ENCODE measurements at regions of chr2 and their contacts with region 1.

Region 1: DNA sequence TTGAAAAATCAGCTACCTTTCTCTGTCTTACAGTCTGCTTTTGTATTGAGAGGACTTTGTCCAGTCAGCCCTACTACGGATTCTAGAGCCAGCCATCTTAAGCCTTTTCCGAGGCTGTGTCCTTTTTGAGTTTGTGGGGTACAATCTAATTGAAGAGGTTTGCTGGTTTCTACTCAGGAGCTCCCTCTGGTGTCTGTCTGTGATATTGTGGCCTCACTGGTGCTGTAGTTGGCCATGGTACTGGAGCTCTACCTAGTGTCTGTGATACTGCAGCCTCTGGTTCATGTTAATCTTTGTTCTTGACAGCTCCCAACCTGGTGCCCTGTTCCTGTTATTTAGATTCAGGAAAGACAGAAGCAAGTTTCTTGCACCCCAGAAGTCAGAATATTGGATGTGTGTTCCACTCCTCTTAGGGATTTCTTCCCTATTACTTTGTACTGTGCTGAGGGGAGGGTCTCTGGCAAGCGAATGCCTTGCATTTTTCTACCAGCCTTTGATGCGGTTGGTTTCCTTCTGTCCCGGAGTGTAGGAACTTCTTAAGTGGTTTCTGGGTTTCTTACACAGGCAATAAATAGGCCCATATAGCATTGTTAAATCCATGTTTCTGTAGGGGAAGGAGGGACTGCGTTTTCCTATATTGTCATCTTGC is 78.5 kb downstream of the ACSL3 start:
- DNase-seq: peak; percentile 45
- ATAC-seq: peak; percentile 98
- H3K4me3 ChIP-seq: no peak overlapping the region
- H3K27ac ChIP-seq: no peak overlapping the region
- H3K4me1 ChIP-seq: peaks cover 7% of the 10 kb centered on the region; the same call in 1 of the 2 replicates
- H3K27me3 ChIP-seq: no peaks in the 10 kb centered on the region
- CTCF ChIP-seq: peak; percentile 82 to 85 (median 85)
- EP300 ChIP-seq: no peak
- POLR2A ChIP-seq: no peak
- RAD21 ChIP-seq: peak; percentile 64

Region 2: GRCh38 chr2:222707689-222708525 is 231.4 kb before region 1 on chr2:
- CTCF ChIA-PET with region 1: interaction called, 72 read pairs
- POLR2A ChIA-PET with region 1: no interaction called
- RAD21 ChIA-PET with region 1: interaction called, 14 read pairs
- SMC1A ChIA-PET with region 1: interaction called, 26 read pairs
- in situ Hi-C with region 1: no loop called
- intact Hi-C with region 1: loop called (anchors 1 kb)
- DNase-seq: no peak
- ATAC-seq: peak; percentile 81
- H3K4me3 ChIP-seq: no peak overlapping the region
- H3K27ac ChIP-seq: no peak overlapping the region
- H3K4me1 ChIP-seq: peaks cover 8% of the 10 kb centered on the region
- H3K27me3 ChIP-seq: no peaks in the 10 kb centered on the region
- CTCF ChIP-seq: peak; percentile 75 to 88 (median 78)
- EP300 ChIP-seq: no peak
- POLR2A ChIP-seq: no peak
- RAD21 ChIP-seq: peak; percentile 92

Region 3: GRCh38 chr2:222903234-222904220 is 35.8 kb before region 1 on chr2:
- CTCF ChIA-PET with region 1: interaction called, 19 read pairs
- POLR2A ChIA-PET with region 1: interaction called, 3 read pairs
- RAD21 ChIA-PET with region 1: interaction called, 6 read pairs
- SMC1A ChIA-PET with region 1: interaction called, 4 read pairs
- in situ Hi-C with region 1: no loop called
- intact Hi-C with region 1: no loop called
- DNase-seq: no peak
- ATAC-seq: peak; percentile 95
- H3K4me3 ChIP-seq: no peak overlapping the region
- H3K27ac ChIP-seq: no peak overlapping the region
- H3K4me1 ChIP-seq: no peaks in the 10 kb centered on the region
- H3K27me3 ChIP-seq: no peaks in the 10 kb centered on the region
- CTCF ChIP-seq: peak; percentile 62 to 77 (median 66); a peak in 5 of 6 replicates
- EP300 ChIP-seq: no peak
- POLR2A ChIP-seq: no peak
- RAD21 ChIP-seq: peak; percentile 95

Region 4: GRCh38 chr2:222922019-222922800 is 17.1 kb before region 1 on chr2:
- CTCF ChIA-PET with region 1: interaction called, 25 read pairs
- POLR2A ChIA-PET with region 1: no interaction called
- RAD21 ChIA-PET with region 1: interaction called, 6 read pairs
- SMC1A ChIA-PET with region 1: interaction called, 6 read pairs
- in situ Hi-C with region 1: no loop called
- intact Hi-C with region 1: no loop called
- DNase-seq: no peak
- ATAC-seq: no peak
- H3K4me3 ChIP-seq: no peak overlapping the region
- H3K27ac ChIP-seq: no peak overlapping the region
- H3K4me1 ChIP-seq: no peaks in the 10 kb centered on the region
- H3K27me3 ChIP-seq: no peaks in the 10 kb centered on the region
- CTCF ChIP-seq: no peak
- EP300 ChIP-seq: no peak
- POLR2A ChIP-seq: no peak
- RAD21 ChIP-seq: no peak

Region 5: DNA sequence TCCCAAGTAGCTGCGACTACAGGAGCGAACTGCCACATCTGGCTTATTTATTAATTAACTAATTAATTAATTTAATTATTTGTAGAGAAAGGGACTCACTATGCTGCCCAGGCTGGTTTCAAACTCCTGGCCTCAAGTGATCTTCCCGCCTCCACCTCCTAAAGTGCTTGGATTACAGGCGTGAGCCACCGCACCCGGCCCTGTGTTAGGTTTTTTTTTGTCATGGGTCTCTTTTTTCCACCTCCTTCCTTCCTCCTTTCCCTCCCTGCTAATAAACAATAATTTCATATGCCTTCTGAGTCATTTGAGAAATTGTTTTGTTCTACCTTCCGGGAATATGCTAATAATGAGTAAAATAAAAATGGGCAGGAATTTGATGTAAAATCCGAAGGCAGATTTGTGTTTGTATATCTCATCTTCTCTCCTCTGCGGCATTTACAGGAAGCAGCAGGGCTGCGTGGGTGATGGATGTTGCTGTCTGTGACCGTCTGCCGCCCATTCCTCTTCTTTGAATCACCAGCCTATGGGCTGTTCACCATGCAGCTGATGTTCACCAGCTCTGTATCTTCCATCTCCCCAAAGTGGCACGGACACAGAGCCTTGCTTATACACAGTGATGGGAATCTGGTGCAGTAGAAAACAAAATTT is 11.4 kb after region 1 on chr2:
- CTCF ChIA-PET with region 1: interaction called, 47 read pairs
- POLR2A ChIA-PET with region 1: no interaction called
- RAD21 ChIA-PET with region 1: no interaction called
- SMC1A ChIA-PET with region 1: interaction called, 11 read pairs
- in situ Hi-C with region 1: no loop called
- intact Hi-C with region 1: no loop called
- DNase-seq: no peak
- ATAC-seq: no peak
- H3K4me3 ChIP-seq: no peak overlapping the region
- H3K27ac ChIP-seq: no peak overlapping the region
- H3K4me1 ChIP-seq: no peaks in the 10 kb centered on the region
- H3K27me3 ChIP-seq: no peaks in the 10 kb centered on the region
- CTCF ChIP-seq: no peak
- EP300 ChIP-seq: no peak
- POLR2A ChIP-seq: no peak
- RAD21 ChIP-seq: no peak

Measured in GM12878 (cell line).